ENCODE measurements at regions of chr17 and their contacts with region 1.

Region 1: DNA sequence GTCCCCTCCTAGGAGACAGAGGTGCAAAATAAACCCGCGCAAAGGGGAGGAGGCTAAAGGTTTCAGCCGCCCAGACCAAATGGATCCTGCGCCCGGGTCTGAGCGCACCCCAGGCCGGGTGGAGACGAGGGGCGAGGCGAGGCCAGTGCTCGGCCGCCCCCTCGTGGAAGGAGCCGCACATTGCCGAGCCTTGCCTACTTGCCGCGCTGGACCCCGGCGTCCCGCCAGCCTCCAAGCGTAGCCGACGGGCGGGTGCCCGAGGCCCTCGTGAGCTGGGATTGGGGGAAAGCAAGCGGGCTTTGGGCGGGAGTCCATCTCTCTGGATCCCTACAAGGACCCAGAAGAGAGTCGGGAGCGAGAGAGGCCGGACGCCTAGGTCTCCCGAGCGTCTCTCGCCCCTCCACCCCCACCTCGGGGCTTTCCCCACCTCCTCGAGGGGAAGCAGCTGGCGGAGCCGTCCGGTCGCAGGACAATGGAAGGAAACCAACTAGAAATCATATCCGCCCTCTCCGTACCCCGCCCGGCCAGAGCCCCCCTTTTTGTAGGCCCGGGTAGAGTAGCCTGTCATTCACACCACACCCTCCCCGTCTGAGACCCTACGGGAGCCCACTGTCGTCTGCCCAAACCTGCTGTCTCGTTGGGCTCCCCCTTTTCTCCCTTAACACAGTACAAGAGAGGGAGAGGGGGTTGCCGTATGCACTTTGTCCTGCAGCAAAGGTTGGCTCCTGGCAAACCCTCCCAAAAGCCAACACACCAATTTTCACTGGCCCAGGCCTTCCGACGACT is 664 bp upstream of the BCL6B start:
- DNase-seq: peak in 1 of 2 experiments; percentile 95
- H3K4me3 ChIP-seq: peak overlapping the region; percentile 57 to 68 (median 59)
- H3K27ac ChIP-seq: no peak overlapping the region
- H3K4me1 ChIP-seq: peaks cover 0 to 15% (median 5%) of the 10 kb centered on the region in 4 experiments; a peak in 6 of 7 replicates
- H3K27me3 ChIP-seq: peaks cover 0 to 16% (median 14%) of the 10 kb centered on the region in 4 experiments; a peak in 6 of 7 replicates
- CTCF ChIP-seq: peak; percentile 88 to 92 (median 89)
- EP300 ChIP-seq: no peak
- POLR2A ChIP-seq: peak in 1 of 2 experiments; percentile 72; a peak in 1 of 3 replicates
- RAD21 ChIP-seq: peak; percentile 77 to 83

Region 2: GRCh38 chr17:6913608-6914443 is 108.4 kb before region 1 on chr17:
- CTCF ChIA-PET with region 1: interaction called, 34 read pairs
- POLR2A ChIA-PET with region 1: interaction called, 3 read pairs
- DNase-seq: peak; percentile 34 to 88
- H3K4me3 ChIP-seq: no peak overlapping the region
- H3K27ac ChIP-seq: no peak overlapping the region
- H3K4me1 ChIP-seq: no peaks in the 10 kb centered on the region
- H3K27me3 ChIP-seq: no peaks in the 10 kb centered on the region; a peak in 2 of 7 replicates
- CTCF ChIP-seq: peak; percentile 68 to 81 (median 77)
- EP300 ChIP-seq: no peak
- POLR2A ChIP-seq: no peak
- RAD21 ChIP-seq: peak; percentile 90

Region 3: DNA sequence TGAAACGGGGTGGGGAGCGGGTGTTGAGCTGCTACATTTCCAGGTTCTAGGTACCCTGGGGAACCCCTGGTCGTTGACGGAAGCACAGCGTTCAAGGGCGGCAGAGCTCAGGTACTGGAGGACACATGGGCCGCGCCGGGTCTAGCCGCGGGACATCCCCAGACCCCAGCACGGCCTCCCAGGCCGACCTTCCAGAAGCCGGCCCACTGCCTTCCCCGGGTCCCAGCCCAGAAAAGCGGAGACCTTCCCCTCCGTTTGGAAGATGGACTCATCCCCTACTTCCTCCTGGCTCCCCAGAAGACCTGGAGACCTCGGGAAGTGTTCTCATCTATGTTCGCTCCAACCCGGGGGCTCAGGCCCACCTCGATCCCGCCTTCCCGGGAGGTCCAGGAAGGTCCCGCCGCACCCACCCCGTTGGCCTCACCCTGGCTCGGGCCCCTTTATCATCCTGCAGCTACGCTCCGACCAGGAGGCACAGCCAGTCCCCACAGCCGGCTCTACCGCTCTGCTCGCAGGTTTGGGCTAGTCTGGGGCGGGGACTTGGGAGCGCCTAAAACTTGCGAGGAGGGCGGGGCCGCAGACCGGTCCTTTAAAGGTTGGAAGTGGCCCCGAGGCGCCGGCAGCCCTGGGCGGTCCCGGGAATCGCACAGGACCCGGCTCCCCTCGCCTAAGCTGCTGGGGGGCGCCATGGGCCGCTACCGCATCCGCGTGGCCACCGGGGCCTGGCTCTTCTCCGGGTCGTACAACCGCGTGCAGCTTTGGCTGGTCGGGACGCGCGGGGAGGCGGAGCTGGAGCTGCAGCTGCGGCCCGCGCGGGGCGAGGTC is 26.5 kb before region 1 on chr17 and contains the start of gene ALOX12:
- CTCF ChIA-PET with region 1: interaction called, 11 read pairs
- POLR2A ChIA-PET with region 1: no interaction called
- DNase-seq: peak in 1 of 2 experiments; percentile 77
- H3K4me3 ChIP-seq: peak within 1 kb of the TSS; percentile 37 to 66 (median 46)
- H3K27ac ChIP-seq: no peak within 1 kb of the TSS
- H3K4me1 ChIP-seq: peaks cover 0 to 9% (median 1%) of the 10 kb centered on the region in 4 experiments; a peak in 2 of 7 replicates
- H3K27me3 ChIP-seq: peaks cover 2 to 39% (median 25%) of the 10 kb centered on the region in 4 experiments
- CTCF ChIP-seq: no peak
- EP300 ChIP-seq: no peak
- POLR2A ChIP-seq: no peak
- RAD21 ChIP-seq: no peak
- total RNA-seq, gene ALOX12: 1.4 and 2.0 TPM in 2 replicates

Region 4: DNA sequence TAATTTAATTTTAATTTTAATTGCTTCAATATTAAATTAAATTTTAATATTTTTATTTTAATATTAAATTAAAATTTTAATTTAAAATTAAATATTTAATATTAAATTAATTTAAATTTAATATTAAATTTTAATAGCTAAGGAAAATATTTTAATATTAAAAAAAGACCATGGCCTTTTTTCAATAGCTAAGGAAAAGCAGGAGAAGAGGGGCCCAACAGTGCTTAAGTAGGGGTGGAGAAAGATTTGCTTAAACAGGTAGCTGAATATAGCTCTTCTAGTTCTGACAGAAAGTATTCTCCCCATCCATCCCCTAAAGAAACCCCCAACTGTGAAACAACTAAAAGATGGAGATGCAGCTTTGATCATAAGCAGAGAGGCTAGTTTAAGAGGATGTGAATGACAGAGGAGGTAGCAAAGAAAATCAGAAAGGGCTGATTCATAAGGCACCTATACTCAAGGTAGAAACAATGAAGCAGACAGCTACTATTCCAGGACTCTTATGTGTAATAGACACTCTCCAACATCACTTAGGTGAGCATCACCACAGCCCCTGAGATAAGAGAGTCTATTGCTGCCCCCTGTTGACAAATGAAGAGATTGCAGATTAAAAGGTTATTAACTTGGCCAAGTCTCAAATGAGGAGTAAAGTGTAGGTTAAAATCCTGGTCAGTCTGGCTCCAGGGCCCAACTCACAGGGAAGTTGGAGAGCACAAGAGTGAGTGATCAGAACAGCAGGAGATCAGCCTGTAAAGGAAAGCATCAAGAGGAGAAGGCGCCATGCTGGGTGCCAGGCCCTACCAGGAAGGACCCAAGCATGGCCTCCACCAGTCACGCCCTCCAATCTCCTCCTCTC is 17.6 kb before region 1 on chr17:
- CTCF ChIA-PET with region 1: interaction called, 27 read pairs
- POLR2A ChIA-PET with region 1: interaction called, 3 read pairs
- DNase-seq: peak in 1 of 2 experiments; percentile 53
- H3K4me3 ChIP-seq: no peak overlapping the region
- H3K27ac ChIP-seq: no peak overlapping the region
- H3K4me1 ChIP-seq: no peaks in the 10 kb centered on the region
- H3K27me3 ChIP-seq: no peaks in the 10 kb centered on the region
- CTCF ChIP-seq: peak in 2 of 3 experiments; percentile 70; a peak in 3 of 4 replicates
- EP300 ChIP-seq: no peak
- POLR2A ChIP-seq: no peak
- RAD21 ChIP-seq: peak; percentile 82 to 88

Region 5: DNA sequence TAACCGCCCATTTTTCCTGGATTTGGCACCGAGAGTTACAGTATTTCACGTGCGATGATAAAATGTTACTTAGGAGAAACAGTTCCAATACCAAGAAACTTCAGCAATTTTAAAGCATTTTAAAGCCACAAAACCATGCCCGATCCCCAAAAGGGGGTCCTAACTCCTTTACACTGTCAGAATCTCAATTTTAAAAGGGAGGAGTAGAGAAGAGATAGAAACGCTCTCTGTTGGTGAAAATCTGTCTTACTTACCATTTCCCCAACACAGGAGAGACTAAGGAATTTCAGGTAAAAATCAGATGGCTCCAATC is 10.3 kb before region 1 on chr17:
- CTCF ChIA-PET with region 1: interaction called, 11 read pairs
- POLR2A ChIA-PET with region 1: interaction called, 13 read pairs
- DNase-seq: no peak
- H3K4me3 ChIP-seq: peak overlapping the region; percentile 86 to 100 (median 88)
- H3K27ac ChIP-seq: peak overlapping the region; percentile 100
- H3K4me1 ChIP-seq: peaks cover 0 to 19% (median 11%) of the 10 kb centered on the region in 4 experiments; a peak in 6 of 7 replicates
- H3K27me3 ChIP-seq: no peaks in the 10 kb centered on the region
- CTCF ChIP-seq: no peak
- EP300 ChIP-seq: no peak
- POLR2A ChIP-seq: no peak
- RAD21 ChIP-seq: no peak

Region 6: DNA sequence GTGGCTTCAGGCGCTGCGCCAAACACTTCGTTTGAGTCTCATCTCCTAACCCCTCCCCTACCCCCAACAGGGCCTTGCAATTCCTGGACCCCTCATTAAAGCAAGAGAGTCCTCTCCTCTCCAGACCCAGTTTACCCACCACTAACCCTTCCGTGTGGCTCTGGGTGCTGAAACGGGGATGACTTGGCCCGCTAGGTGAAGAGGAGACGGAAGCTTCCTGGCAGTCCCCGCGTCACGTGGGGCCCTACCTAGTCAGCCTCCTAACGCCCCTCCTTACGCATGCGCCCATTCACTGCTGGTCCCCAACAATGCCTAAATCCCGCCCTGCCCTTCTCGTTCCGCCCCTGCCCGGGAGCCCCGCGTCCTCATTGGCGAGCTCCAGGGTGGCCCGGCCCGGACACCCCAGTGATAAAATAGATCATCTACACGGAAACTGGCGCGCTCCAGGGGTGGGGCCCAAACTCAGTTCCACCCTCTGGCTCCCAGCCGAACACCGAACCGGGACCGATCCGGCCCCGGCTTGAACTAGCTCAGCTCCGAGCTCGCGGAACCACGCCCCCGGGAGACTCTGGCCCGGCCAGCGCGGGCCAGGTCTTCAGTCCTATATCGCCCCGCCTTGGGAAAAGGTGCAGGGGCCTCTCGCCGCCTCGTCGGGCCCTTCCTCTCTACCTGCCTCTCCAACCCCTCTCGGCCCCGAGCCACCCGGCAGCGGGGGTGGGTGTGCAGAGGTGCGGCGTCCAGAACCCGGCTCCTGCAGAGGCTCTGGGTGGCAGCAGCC is 13.6 kb after region 1 on chr17 and contains the start of gene SLC16A13:
- CTCF ChIA-PET with region 1: interaction called, 5 read pairs
- POLR2A ChIA-PET with region 1: interaction called, 15 read pairs
- DNase-seq: peak; percentile 92 to 94
- H3K4me3 ChIP-seq: peak within 1 kb of the TSS; percentile 78 to 88 (median 84)
- H3K27ac ChIP-seq: peak within 1 kb of the TSS; percentile 48; the same call in 1 of the 2 replicates
- H3K4me1 ChIP-seq: peaks cover 1 to 9% (median 4%) of the 10 kb centered on the region in 4 experiments; a peak in 4 of 7 replicates
- H3K27me3 ChIP-seq: no peaks in the 10 kb centered on the region
- CTCF ChIP-seq: no peak
- EP300 ChIP-seq: no peak
- POLR2A ChIP-seq: peak in 1 of 2 experiments; percentile 50; a peak in 1 of 3 replicates
- RAD21 ChIP-seq: no peak
- total RNA-seq, gene SLC16A13: 4.7 and 5.8 TPM in 2 replicates

Region 7: DNA sequence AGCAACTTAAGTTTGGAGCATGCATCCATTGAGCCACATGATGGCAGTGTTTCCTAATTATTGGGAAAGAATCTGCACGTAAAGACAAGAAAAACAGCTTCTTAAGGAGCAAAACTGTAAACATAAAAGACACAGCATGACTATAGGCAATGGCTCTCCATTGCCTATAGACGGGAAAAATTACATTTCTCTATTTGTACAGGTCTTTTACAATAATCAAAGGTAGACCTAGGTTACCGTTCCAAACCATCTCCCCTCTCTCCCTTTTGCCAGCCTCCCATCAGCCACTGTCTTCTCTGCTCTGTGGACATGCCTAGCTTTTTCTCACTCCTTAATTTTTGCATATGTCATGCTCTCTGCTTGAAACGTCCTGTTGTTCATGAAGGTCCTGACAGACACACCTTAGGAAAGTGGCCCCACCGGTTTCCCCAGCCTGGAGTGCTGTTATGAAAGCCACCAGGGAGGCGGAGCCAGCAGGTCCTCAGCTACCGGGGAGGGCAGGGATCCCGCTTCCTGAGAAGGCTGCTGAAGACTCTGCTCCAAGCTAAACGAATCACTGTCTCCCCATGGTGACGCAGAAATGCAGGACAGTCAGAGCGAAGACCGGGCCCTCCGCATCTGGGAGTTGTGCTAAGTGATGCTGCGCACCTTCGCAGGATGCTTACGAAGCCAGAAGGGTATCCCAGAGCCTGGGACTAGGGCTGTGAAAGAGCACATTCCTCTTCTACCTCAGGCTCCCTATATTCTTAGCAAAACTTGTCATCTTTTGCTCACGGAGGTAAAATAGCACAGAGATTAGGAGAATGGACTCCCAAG is 23.9 kb after region 1 on chr17:
- CTCF ChIA-PET with region 1: interaction called, 17 read pairs
- POLR2A ChIA-PET with region 1: interaction called, 5 read pairs
- DNase-seq: peak in 1 of 2 experiments; percentile 72
- H3K4me3 ChIP-seq: peak overlapping the region; percentile 30 to 64 (median 34); a peak in 7 of 8 replicates
- H3K27ac ChIP-seq: no peak overlapping the region
- H3K4me1 ChIP-seq: peaks cover 0 to 18% (median 16%) of the 10 kb centered on the region in 4 experiments; a peak in 5 of 7 replicates
- H3K27me3 ChIP-seq: peaks cover 3 to 33% (median 32%) of the 10 kb centered on the region in 4 experiments
- CTCF ChIP-seq: peak in 2 of 3 experiments; percentile 53 to 68; a peak in 3 of 4 replicates
- EP300 ChIP-seq: no peak
- POLR2A ChIP-seq: no peak
- RAD21 ChIP-seq: peak; percentile 89 to 91